HEK293 (cell line): ENCODE measurements at regions of chr2 and their contacts with region 1.

Region 1: GRCh38 chr2:128062571-128062970 is 28.4 kb upstream of the UGGT1 start:
- H3K4me3 ChIP-seq: no peak overlapping the region
- H3K27ac ChIP-seq: no peak overlapping the region
- H3K4me1 ChIP-seq: no peaks in the 10 kb centered on the region
- CTCF ChIP-seq: no peak

Region 2: DNA sequence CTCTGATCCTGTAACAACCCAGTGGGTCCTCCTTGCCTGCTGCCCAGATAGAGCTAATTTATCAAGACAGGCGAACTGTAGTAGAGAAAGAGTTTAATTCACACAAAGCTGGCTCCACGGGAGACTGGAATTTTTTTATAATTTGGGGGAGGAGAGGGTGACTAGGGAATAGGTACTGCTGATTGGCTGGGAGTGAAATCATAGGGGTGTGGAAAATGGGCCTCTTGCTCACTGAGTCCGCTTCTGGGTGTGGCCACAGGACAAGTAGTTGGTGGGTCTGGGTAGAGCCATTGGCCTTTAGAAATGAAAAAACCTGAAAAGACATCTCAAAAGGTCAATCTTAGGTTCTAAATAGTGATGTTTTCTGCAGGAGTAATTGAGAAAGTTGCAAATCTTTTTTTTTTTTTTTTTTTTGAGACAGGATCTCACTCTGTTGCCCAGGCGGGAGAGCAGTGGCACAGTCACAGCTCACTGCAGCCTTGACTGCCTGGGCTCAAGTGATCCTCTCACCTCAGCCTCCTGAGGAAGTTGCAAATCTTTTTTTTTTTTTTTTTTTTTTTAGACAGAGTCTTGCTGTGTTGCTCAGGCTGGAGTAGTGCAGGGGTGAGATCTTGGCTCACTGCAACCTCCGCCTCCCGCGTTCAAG is 14.0 kb after region 1 on chr2:
- CTCF ChIA-PET with region 1: interaction called, 10 read pairs
- POLR2A ChIA-PET with region 1: no interaction called
- H3K4me3 ChIP-seq: no peak overlapping the region
- H3K27ac ChIP-seq: no peak overlapping the region
- H3K4me1 ChIP-seq: no peaks in the 10 kb centered on the region
- CTCF ChIP-seq: no peak

Region 3: GRCh38 chr2:128103407-128103806 is 40.8 kb after region 1 on chr2:
- CTCF ChIA-PET with region 1: interaction called, 14 read pairs
- POLR2A ChIA-PET with region 1: no interaction called
- H3K4me3 ChIP-seq: no peak overlapping the region
- H3K27ac ChIP-seq: no peak overlapping the region
- H3K4me1 ChIP-seq: 0 out of 2 replicates have a peak, but pooled peaks cover 4% of the 10 kb centered on the region
- CTCF ChIP-seq: no peak